ENCODE measurements at regions of chr13 and their contacts with region 1.

Region 1: GRCh38 chr13:77492982-77493381 is 42.5 kb upstream of the SCEL start:
- DNase-seq: no peak
- ATAC-seq: peak; percentile 44
- H3K4me3 Mint-ChIP-seq: no peak overlapping the region
- H3K27ac Mint-ChIP-seq: no peak overlapping the region
- H3K4me1 Mint-ChIP-seq: no peaks in the 10 kb centered on the region
- H3K27me3 Mint-ChIP-seq: no peaks in the 10 kb centered on the region

Region 2: GRCh38 chr13:77448679-77449078 is 44.3 kb before region 1 on chr13:
- CTCF ChIA-PET with region 1: no interaction called
- POLR2A ChIA-PET with region 1: no interaction called
- DNase-seq: no peak
- ATAC-seq: no peak
- H3K4me3 Mint-ChIP-seq: no peak overlapping the region
- H3K27ac Mint-ChIP-seq: no peak overlapping the region
- H3K4me1 Mint-ChIP-seq: no peaks in the 10 kb centered on the region
- H3K27me3 Mint-ChIP-seq: peaks cover 6% of the 10 kb centered on the region

Region 3: DNA sequence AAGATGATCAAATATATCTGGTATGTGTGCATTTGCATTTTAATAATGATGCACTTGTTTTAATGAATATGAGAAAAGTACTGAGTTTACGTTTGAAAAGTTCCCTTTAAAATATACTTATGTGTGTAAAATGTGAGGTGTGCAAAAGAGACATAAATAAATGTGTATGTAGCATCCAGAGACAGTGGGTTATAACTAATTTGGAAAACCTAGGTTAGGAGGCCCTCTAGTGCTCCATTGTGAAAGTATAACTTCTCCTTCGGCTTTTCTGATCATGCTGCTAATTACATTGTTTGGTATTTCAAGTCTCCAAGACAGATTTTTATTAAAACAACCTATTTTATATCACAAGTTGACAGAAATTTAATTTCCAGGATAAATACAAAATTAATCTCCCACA is 72.7 kb after region 1 on chr13:
- CTCF ChIA-PET with region 1: interaction called, 15 read pairs
- POLR2A ChIA-PET with region 1: no interaction called
- DNase-seq: no peak
- ATAC-seq: no peak
- H3K4me3 Mint-ChIP-seq: no peak overlapping the region
- H3K27ac Mint-ChIP-seq: no peak overlapping the region
- H3K4me1 Mint-ChIP-seq: no peaks in the 10 kb centered on the region
- H3K27me3 Mint-ChIP-seq: peaks cover 7% of the 10 kb centered on the region